WTC11 (cell line): ENCODE measurements at regions of chr13 and their contacts with region 1.

Region 1: DNA sequence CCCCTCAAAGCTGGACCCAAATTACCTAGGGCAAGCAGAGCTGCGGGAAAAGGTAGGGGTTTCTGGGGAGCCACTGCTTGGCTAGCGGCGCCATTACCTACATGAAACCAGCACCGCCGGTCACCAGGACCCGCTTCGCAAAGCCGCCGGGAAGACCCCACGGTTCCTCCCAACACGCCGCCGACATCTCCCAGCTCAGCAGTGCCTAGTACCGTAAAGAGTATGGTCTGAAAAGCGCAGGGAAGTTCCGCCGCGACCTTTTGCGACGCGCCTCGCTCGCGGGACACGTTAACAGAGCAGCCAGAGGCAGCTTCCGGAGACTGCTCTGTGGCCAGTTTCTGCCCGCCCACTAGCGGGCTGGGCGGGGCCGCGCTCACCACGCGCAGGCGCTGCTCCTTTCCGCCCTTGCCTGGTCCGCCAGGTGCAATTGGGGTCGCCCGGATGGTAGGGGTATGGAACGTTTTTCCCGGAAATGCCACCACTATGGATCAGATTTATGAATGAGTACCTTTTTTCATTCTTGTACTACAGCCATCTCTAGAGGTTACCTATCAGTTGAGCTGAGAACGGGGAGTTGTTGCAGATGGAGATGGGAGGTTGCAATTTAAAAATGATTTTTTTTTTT is at the start of gene TGDS:
- DNase-seq: peak; percentile 94
- ATAC-seq: peak; percentile 98
- H3K4me3 Mint-ChIP-seq: peak within 1 kb of the TSS; percentile 94
- H3K27ac Mint-ChIP-seq: peak within 1 kb of the TSS; percentile 95
- H3K4me1 Mint-ChIP-seq: peaks cover 18% of the 10 kb centered on the region
- H3K27me3 Mint-ChIP-seq: peaks cover 19% of the 10 kb centered on the region
- CTCF ChIP-seq: no peak
- total RNA-seq, gene TGDS: 12.5 to 15.8 TPM (median 15.2 TPM) in 3 replicates

Region 2: DNA sequence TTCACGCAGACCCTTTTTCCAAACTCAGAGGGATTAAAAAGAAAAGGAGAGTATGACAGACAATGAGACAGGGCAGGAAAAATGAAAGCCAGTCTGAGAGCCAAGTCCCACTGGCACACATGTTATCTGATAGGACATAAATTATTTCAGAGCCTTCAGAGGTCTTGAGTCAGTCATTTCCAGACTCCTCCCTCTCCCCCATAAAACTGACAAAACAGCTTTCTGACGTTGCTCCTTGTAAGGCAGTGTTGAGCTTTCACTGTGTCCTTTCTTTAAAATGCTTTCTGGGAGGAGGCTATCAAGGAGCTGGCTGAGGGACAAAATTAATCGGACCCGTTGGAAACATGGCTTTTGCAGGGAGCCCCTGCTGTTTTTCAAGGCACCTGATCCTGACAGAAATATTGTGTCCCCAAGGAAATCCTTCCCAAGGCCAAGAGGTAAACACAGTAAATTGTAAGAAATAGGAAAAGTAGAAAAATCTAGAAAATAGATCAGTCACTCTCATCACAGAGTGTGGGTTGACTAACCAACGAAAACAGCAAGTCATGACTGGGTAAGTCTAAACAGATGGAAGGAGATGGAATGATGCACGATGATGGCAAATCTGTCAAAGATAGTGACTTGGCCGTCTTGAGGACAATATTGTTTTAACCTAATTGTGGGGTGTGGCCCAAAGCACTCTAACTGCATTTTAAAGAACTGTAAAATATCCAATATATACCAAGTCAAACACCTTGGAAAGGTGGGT is 206.3 kb before region 1 on chr13:
- CTCF ChIA-PET with region 1: no interaction called
- POLR2A ChIA-PET with region 1: no interaction called
- DNase-seq: no peak
- ATAC-seq: no peak
- H3K4me3 Mint-ChIP-seq: no peak overlapping the region
- H3K27ac Mint-ChIP-seq: no peak overlapping the region
- H3K4me1 Mint-ChIP-seq: peaks cover 12% of the 10 kb centered on the region
- H3K27me3 Mint-ChIP-seq: no peaks in the 10 kb centered on the region
- CTCF ChIP-seq: no peak

Region 3: GRCh38 chr13:94549232-94550061 is 46.6 kb before region 1 on chr13:
- CTCF ChIA-PET with region 1: interaction called, 9 read pairs
- POLR2A ChIA-PET with region 1: interaction called, 11 read pairs
- DNase-seq: peak; percentile 88
- ATAC-seq: peak; percentile 74
- H3K4me3 Mint-ChIP-seq: peak overlapping the region; percentile 83
- H3K27ac Mint-ChIP-seq: peak overlapping the region; percentile 91
- H3K4me1 Mint-ChIP-seq: peaks cover 36% of the 10 kb centered on the region
- H3K27me3 Mint-ChIP-seq: peaks cover 17% of the 10 kb centered on the region
- CTCF ChIP-seq: no peak

Region 4: GRCh38 chr13:94579063-94579462 is 17.0 kb before region 1 on chr13:
- CTCF ChIA-PET with region 1: no interaction called
- POLR2A ChIA-PET with region 1: no interaction called
- DNase-seq: no peak
- ATAC-seq: no peak
- H3K4me3 Mint-ChIP-seq: no peak overlapping the region
- H3K27ac Mint-ChIP-seq: no peak overlapping the region
- H3K4me1 Mint-ChIP-seq: no peaks in the 10 kb centered on the region
- H3K27me3 Mint-ChIP-seq: no peaks in the 10 kb centered on the region
- CTCF ChIP-seq: no peak

Region 5: GRCh38 chr13:94620286-94620896 is 24.3 kb after region 1 on chr13:
- CTCF ChIA-PET with region 1: interaction called, 13 read pairs
- POLR2A ChIA-PET with region 1: no interaction called
- DNase-seq: peak; percentile 48
- ATAC-seq: peak; percentile 77
- H3K4me3 Mint-ChIP-seq: no peak overlapping the region
- H3K27ac Mint-ChIP-seq: no peak overlapping the region
- H3K4me1 Mint-ChIP-seq: no peaks in the 10 kb centered on the region
- H3K27me3 Mint-ChIP-seq: no peaks in the 10 kb centered on the region
- CTCF ChIP-seq: peak; percentile 61